AG04449 (cell line): ENCODE measurements at regions of chr1 and their contacts with region 1.

Region 1: GRCh38 chr1:93692983-93693591 is 11.4 kb upstream of the BCAR3 start:
- DNase-seq: no peak
- H3K4me3 ChIP-seq: no peak overlapping the region; the same call in 1 of the 2 replicates
- CTCF ChIP-seq: no peak

Region 2: DNA sequence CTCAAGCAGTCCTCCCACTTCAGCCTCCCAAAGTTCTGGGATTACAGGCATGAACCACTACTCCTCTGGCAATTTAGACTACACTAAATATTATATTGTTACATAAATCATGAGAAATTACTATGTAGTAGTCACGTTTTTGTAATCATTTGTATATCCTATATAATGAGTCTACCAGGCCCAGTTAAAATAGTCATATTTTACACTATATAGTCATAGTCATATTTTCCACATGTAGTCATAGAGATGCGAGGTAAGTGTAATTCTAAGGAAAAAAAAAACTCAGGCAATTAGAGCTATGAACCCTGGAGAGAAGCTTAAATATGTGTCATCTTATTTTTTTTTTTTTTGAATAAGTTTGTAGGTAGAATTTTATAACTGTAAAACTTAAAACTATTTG is 155.2 kb before region 1 on chr1:
- CTCF ChIA-PET with region 1: no interaction called
- POLR2A ChIA-PET with region 1: no interaction called
- DNase-seq: no peak
- H3K4me3 ChIP-seq: no peak overlapping the region
- CTCF ChIP-seq: no peak

Region 3: GRCh38 chr1:93659822-93660503 is 33.1 kb before region 1 on chr1:
- CTCF ChIA-PET with region 1: no interaction called
- POLR2A ChIA-PET with region 1: no interaction called
- DNase-seq: no peak
- H3K4me3 ChIP-seq: no peak overlapping the region
- CTCF ChIP-seq: no peak

Region 4: GRCh38 chr1:93680757-93681550 is 12.1 kb before region 1 on chr1:
- CTCF ChIA-PET with region 1: interaction called, 11 read pairs
- POLR2A ChIA-PET with region 1: interaction called, 14 read pairs
- DNase-seq: no peak
- H3K4me3 ChIP-seq: peak overlapping the region; percentile 75
- CTCF ChIP-seq: peak; percentile 83